Calu3 (cell line): ENCODE measurements at regions of chr3 and their contacts with region 1.

Region 1: GRCh38 chr3:70189884-70190473 is 122.5 kb downstream of the MDFIC2 start:
- DNase-seq: no peak
- H3K4me3 Mint-ChIP-seq: no peak overlapping the region
- H3K27ac Mint-ChIP-seq: no peak overlapping the region
- H3K4me1 Mint-ChIP-seq: no peaks in the 10 kb centered on the region
- H3K27me3 Mint-ChIP-seq: no peaks in the 10 kb centered on the region
- CTCF ChIP-seq: no peak

Region 2: DNA sequence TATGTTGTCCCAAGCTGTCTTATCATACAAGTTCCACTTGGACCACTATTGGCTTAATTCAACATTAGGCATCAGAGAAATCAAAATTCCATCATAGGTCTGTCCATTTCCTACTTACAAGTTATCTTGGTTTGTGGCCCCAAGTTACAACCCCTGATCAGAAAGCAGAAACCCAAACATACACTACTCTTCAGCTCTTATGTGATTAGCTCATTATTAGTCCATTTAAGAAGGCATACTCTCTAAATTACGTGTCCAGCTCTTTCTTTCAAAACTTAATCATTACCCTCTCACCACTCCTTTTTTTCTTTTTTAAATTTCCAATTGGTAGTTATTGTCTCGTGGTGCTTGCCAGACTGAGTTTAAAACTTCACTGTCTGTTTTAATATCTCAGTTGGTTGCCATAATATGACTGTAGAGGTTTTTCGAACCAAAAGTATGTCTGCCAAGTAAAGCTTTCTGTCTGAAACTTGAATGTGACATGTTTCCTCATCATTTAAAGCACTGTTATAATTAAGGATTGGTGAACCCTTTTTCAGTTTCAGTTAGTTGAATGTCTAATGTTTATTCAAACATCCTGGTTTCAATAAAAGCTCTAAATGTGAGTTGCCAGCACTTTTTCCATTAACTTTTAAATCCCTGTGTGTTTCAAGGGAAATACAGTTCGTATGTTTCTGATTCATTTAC is 40.1 kb before region 1 on chr3:
- CTCF ChIA-PET with region 1: interaction called, 13 read pairs
- intact Hi-C with region 1: no loop called
- DNase-seq: no peak
- H3K4me3 Mint-ChIP-seq: no peak overlapping the region
- H3K27ac Mint-ChIP-seq: no peak overlapping the region
- H3K4me1 Mint-ChIP-seq: no peaks in the 10 kb centered on the region
- H3K27me3 Mint-ChIP-seq: no peaks in the 10 kb centered on the region
- CTCF ChIP-seq: no peak